Ascending aorta (tissue), 2 donors: ENCODE measurements at regions of chr13 and their contacts with region 1.

Region 1: DNA sequence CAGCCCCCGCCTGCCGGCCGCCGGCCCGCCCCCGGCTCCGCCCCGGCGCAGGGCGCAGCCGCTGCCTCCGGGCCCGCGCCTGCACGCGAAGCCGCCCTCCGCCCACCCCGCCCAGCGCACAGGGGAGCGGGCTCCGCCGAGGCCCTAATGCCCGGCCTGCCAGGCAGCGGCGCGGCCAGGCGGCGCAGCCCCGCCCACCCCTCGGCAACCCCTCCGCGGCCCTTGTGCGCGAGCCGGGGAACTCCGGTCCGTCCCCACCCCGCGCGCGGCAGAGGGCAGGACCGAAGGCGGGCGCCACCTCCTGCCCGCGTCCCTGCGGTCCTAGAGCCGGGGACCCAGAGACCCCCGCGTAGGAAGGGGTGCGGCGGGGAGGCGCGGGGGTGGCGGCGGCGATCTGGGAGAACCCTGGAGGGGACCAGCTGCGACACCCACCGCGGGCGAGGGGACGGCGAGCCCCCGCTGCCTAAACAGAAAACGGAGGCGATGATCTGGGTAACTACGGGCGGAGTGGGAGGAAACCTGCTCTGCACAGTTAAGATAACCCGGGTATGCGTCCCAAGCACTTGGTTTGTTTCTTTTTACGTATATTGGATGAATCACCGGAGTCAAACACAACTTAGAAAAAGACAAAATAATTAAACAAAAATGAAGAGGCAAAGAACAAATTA is 350 bp upstream of the USP12 start:
- DNase-seq: peak; percentile 66 to 97
- H3K4me3 ChIP-seq: peak overlapping the region; percentile 86 to 90
- H3K27ac ChIP-seq: peak overlapping the region; percentile 89 to 99
- H3K4me1 ChIP-seq: peaks cover 9 to 22% of the 10 kb centered on the region in 2 donors
- H3K27me3 ChIP-seq: no peaks in the 10 kb centered on the region
- CTCF ChIP-seq: peak in 1 of 3 experiments; percentile 22

Region 2: GRCh38 chr13:27130979-27131623 is 40.9 kb before region 1 on chr13:
- intact Hi-C with region 1: loop called (anchors 5 kb)
- DNase-seq: no peak
- H3K4me3 ChIP-seq: no peak overlapping the region
- H3K27ac ChIP-seq: peak overlapping the region in 1 of 2 donors; percentile 59
- H3K4me1 ChIP-seq: peaks cover 7 to 27% of the 10 kb centered on the region in 2 donors
- H3K27me3 ChIP-seq: no peaks in the 10 kb centered on the region
- CTCF ChIP-seq: no peak

Region 3: DNA sequence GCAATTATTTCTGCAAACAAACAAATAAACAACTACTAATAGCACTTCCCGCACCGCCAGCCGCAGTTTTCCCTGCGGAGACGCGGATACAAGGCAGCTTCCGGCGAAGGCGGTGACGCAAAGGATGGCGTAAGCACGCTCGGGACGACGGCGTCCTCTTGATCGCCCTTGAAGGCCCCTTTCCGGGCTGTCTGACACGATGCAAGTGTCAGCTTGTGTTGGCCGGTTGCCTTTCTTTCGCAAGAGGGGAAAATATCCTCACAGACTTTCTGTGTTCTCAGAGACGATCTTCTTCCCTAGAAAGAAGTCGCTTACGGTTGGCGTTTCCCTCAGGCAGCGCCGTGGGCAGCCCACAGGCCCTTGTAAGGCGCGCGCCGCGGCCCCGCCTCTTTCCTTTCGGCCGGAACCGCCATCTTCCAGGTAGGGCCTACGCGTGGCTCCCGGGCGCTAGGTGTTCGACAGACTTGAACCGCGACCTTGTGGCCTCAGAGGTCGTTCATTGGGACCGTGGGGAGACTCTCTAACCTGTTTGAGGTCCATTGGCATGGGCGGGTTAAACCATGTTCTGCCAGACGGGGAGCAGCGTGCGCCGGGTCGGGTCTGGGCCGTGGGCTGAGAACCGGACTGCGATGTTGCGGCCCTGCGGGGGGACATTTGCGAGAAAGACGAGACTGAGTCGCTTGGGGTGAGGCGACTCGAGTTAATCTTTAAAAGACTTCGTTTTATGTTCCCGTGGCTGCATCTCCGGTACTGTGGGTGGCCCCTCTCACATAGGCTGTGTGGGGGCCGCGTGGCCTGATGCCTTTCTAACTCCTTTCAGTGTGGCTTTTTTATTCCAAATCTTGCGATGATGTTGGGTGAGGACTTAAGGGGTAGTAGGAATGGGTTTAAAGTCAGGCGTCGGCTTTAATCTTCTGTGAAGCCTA is 79.5 kb after region 1 on chr13 and contains the start of gene RPL21:
- intact Hi-C with region 1: loop called (anchors 1 kb)
- DNase-seq: peak; percentile 81 to 98
- H3K4me3 ChIP-seq: peak within 1 kb of the TSS; percentile 82 to 93
- H3K27ac ChIP-seq: peak within 1 kb of the TSS; percentile 91 to 97
- H3K4me1 ChIP-seq: peaks cover 5 to 17% of the 10 kb centered on the region in 2 donors
- H3K27me3 ChIP-seq: no peaks in the 10 kb centered on the region
- CTCF ChIP-seq: no peak
- total RNA-seq, gene RPL21: 377 TPM

Region 4: DNA sequence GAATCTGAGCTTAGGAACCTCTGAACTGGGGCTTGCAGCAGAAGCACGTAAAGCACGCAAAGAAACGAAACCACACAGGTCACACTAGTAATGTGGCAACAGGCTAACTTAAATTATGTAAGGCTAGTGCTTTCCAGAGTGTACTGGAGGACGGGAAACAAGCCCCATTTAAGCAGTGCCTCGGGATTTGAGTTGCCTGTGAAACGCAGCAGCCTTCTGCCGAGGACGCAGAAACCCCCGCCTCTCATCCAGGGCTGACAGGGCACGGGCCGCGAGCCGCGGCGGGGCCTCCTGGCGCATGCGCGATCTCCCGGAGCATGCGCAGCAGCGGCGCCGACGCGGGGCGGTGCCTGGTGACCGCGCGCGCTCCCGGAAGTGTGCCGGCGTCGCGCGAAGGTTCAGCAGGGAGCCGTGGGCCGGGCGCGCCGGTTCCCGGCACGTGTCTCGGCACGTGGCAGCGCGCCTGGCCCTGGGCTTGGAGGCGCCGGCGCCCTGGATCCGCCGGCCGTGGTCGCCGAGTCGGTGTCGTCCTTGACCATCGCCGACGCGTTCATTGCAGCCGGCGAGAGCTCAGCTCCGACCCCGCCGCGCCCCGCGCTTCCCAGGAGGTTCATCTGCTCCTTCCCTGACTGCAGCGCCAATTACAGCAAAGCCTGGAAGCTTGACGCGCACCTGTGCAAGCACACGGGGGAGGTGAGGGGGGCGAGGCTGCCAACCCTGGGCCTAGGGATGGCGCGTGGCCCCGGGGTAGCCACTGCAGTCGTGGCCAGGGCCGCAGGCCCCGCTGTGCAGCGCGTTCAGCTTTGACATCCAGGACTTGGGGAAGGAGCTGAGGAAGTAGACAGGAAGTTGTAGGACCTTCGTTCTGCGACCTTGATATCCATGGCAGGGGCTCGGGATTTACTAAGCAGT is 252.5 kb after region 1 on chr13 and contains the start of gene GTF3A:
- intact Hi-C with region 1: loop called (anchors 2 kb)
- DNase-seq: peak; percentile 37 to 87
- H3K4me3 ChIP-seq: peak within 1 kb of the TSS; percentile 82 to 94
- H3K27ac ChIP-seq: peak within 1 kb of the TSS; percentile 84 to 87
- H3K4me1 ChIP-seq: peaks cover 9 to 22% of the 10 kb centered on the region in 2 donors
- H3K27me3 ChIP-seq: no peaks in the 10 kb centered on the region
- CTCF ChIP-seq: no peak
- total RNA-seq, gene GTF3A: 197 TPM

Region 5: GRCh38 chr13:28110414-28110813 is 938.5 kb after region 1 on chr13:
- intact Hi-C with region 1: no loop called
- DNase-seq: no peak
- H3K4me3 ChIP-seq: no peak overlapping the region
- H3K27ac ChIP-seq: no peak overlapping the region
- H3K4me1 ChIP-seq: no peaks in the 10 kb centered on the region
- H3K27me3 ChIP-seq: no peaks in the 10 kb centered on the region
- CTCF ChIP-seq: no peak